Endothelial cell of umbilical vein (primary cell): ENCODE measurements at regions of chr6 and their contacts with region 1.

Region 1: GRCh38 chr6:127177030-127177922 is 58.8 kb downstream of the RSPO3 start:
- DNase-seq: peak; percentile 74
- H3K4me3 ChIP-seq: no peak overlapping the region
- H3K27ac ChIP-seq: peak overlapping the region; percentile 56
- H3K4me1 ChIP-seq: peaks cover 17% of the 10 kb centered on the region
- H3K27me3 ChIP-seq: no peaks in the 10 kb centered on the region
- CTCF ChIP-seq: no peak
- POLR2A ChIP-seq: no peak

Region 2: GRCh38 chr6:127131275-127131674 is 46.0 kb before region 1 on chr6:
- CTCF ChIA-PET with region 1: interaction called, 3 read pairs
- POLR2A ChIA-PET with region 1: no interaction called
- dilution Hi-C with region 1: no loop called
- intact Hi-C with region 1: loop called (anchors 2 kb)
- DNase-seq: peak; percentile 55
- H3K4me3 ChIP-seq: no peak overlapping the region
- H3K27ac ChIP-seq: no peak overlapping the region
- H3K4me1 ChIP-seq: peaks cover 16% of the 10 kb centered on the region
- H3K27me3 ChIP-seq: no peaks in the 10 kb centered on the region
- CTCF ChIP-seq: no peak
- POLR2A ChIP-seq: no peak

Region 3: GRCh38 chr6:127146932-127147331 is 30.3 kb before region 1 on chr6:
- CTCF ChIA-PET with region 1: interaction called, 4 read pairs
- POLR2A ChIA-PET with region 1: no interaction called
- dilution Hi-C with region 1: no loop called
- intact Hi-C with region 1: loop called (anchors 1 kb)
- DNase-seq: peak; percentile 90
- H3K4me3 ChIP-seq: peak overlapping the region in 1 of 3 experiments; percentile 15
- H3K27ac ChIP-seq: peak overlapping the region; percentile 46
- H3K4me1 ChIP-seq: peaks cover 21% of the 10 kb centered on the region
- H3K27me3 ChIP-seq: no peaks in the 10 kb centered on the region
- CTCF ChIP-seq: no peak
- POLR2A ChIP-seq: peak; percentile 37

Region 4: GRCh38 chr6:127162836-127163235 is 14.4 kb before region 1 on chr6:
- CTCF ChIA-PET with region 1: interaction called, 6 read pairs
- POLR2A ChIA-PET with region 1: no interaction called
- dilution Hi-C with region 1: no loop called
- intact Hi-C with region 1: loop called (anchors 1 kb)
- DNase-seq: peak; percentile 76
- H3K4me3 ChIP-seq: no peak overlapping the region
- H3K27ac ChIP-seq: no peak overlapping the region
- H3K4me1 ChIP-seq: peaks cover 16% of the 10 kb centered on the region
- H3K27me3 ChIP-seq: no peaks in the 10 kb centered on the region
- CTCF ChIP-seq: no peak
- POLR2A ChIP-seq: no peak

Region 5: DNA sequence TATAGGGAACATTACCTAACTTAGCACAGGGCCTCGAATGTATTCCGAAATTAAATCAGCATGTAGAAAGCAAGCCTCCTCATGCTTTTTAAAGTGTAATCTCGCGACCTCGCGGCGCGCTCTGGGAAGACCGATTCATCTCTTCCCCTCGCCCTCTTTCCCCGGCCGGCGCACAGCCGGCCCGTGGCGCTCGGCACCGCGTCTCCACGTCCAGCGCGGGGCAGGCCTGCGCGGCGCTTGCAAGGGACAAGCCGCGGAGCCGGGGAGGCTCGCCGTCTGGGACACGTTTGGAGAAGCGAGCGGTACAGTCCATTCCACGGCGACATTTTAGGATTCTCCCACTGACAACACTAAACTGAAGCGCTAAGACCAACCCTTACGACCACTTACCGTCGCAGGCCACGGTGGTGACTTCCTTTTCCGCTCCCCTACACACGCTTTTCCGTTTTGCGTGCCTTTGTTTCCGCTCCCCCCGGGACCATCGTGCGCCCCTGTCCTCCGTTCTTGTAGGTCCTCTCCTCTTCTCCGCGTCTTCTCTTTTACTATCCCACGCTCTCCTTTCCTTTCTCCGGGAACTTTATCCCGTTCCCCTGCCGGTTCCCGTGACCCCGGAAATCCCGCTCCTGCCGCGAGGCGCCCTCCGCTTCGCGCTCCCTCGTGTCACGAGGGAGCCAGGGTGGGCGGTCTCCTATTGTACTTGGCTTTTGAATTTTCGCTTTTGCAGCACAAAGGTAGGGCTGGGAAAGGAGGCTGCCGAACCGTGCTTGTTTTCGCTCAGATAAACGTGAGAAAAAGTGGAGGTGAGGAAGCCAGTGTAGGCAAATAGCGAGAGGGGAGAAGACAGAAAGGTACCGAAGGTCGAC is 165.9 kb after region 1 on chr6 and contains the start of gene ECHDC1:
- CTCF ChIA-PET with region 1: no interaction called
- POLR2A ChIA-PET with region 1: no interaction called
- dilution Hi-C with region 1: no loop called
- intact Hi-C with region 1: no loop called
- DNase-seq: peak; percentile 79
- H3K4me3 ChIP-seq: peak within 1 kb of the TSS; percentile 48 to 94 (median 86)
- H3K27ac ChIP-seq: peak within 1 kb of the TSS; percentile 88
- H3K4me1 ChIP-seq: peaks cover 20% of the 10 kb centered on the region
- H3K27me3 ChIP-seq: no peaks in the 10 kb centered on the region
- CTCF ChIP-seq: no peak
- POLR2A ChIP-seq: peak; percentile 74
- total RNA-seq, gene ECHDC1: 36.7 and 36.8 TPM in 2 replicates

Region 6: DNA sequence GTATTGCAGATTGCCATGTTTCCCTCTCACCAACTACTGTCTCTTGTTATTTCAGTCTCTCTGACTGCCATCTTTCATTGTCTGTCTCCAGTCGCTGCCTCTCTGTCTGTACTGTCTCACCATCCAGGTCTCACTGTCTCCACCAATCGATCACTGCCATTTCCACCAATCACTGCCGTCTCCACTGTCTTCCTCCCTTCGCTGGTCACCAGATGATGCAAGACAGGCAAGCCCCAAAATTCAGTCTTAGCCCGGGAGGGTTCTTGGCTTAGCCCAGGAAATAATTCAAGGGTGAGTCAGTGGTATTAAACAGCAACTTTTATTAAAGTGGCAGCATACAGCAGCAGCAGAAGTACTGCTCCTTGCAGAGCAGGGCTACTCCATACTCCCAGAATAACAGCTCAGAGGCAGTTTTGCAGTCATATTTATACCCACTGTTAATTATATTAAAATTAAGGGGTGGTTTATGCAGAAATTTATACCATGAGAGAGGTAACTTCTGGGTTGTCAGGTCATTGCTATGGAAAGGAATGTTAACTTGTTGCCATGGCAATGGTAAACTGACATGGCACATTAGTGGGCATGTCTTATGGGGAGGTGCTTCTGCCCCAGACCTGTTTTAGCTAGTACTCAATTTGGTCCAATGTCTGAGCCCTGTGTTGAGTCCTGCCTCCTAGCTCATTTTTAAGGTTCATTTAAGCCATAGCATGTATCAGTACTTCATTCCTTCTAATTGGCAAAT is 189.2 kb after region 1 on chr6:
- CTCF ChIA-PET with region 1: no interaction called
- POLR2A ChIA-PET with region 1: no interaction called
- dilution Hi-C with region 1: no loop called
- intact Hi-C with region 1: no loop called
- DNase-seq: peak; percentile 36
- H3K4me3 ChIP-seq: no peak overlapping the region
- H3K27ac ChIP-seq: no peak overlapping the region
- H3K4me1 ChIP-seq: no peaks in the 10 kb centered on the region
- H3K27me3 ChIP-seq: no peaks in the 10 kb centered on the region
- CTCF ChIP-seq: no peak
- POLR2A ChIP-seq: no peak

Region 7: DNA sequence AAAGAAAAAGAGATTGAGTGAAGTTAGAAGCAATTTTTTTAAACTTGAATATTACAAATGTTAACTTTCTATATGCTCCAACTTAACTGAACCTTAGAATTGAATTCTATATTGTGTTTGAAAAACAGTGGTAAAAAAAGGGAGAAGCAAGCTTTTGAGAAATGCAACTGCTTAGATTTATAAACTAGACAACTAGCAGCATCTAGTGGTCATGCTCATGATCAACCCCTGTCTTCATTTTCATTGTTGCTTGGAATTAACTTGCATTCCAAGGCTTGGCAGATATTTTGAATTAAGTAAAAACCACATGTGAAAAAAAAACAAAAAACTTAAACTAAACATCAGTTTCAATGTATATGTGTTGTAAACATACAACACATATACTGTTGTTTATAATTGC is 512.8 kb after region 1 on chr6:
- CTCF ChIA-PET with region 1: no interaction called
- POLR2A ChIA-PET with region 1: no interaction called
- dilution Hi-C with region 1: no loop called
- intact Hi-C with region 1: no loop called
- DNase-seq: peak; percentile 3
- H3K4me3 ChIP-seq: no peak overlapping the region
- H3K27ac ChIP-seq: no peak overlapping the region
- H3K4me1 ChIP-seq: no peaks in the 10 kb centered on the region
- H3K27me3 ChIP-seq: peaks cover 2 to 4% of the 10 kb centered on the region in 2 experiments
- CTCF ChIP-seq: peak; percentile 5 to 10
- POLR2A ChIP-seq: no peak